ENCODE measurements at regions of chr1 and their contacts with region 1.

Region 1: GRCh38 chr1:231354330-231355020 is 16.4 kb downstream of the SPRTN start:
- DNase-seq: no peak
- ATAC-seq: no peak

Region 2: GRCh38 chr1:231603598-231604275 is 249.3 kb after region 1 on chr1:
- intact Hi-C with region 1: loop called (anchors 5 kb)
- DNase-seq: no peak
- ATAC-seq: peak; percentile 53